Psoas muscle (tissue), 8 donors: ENCODE measurements at regions of chr16 and their contacts with region 1.

Region 1: GRCh38 chr16:12067714-12068401 is 91.3 kb downstream of the SNX29 start:
- DNase-seq: peak in 1 of 2 donors; percentile 23
- ATAC-seq: peak; percentile 78 to 90 (median 80)
- H3K4me3 ChIP-seq: no peak overlapping the region
- H3K27ac ChIP-seq: no peak overlapping the region
- H3K4me1 ChIP-seq: peaks cover 6% of the 10 kb centered on the region
- H3K27me3 ChIP-seq: no peaks in the 10 kb centered on the region
- CTCF ChIP-seq: peak; percentile 93

Region 2: DNA sequence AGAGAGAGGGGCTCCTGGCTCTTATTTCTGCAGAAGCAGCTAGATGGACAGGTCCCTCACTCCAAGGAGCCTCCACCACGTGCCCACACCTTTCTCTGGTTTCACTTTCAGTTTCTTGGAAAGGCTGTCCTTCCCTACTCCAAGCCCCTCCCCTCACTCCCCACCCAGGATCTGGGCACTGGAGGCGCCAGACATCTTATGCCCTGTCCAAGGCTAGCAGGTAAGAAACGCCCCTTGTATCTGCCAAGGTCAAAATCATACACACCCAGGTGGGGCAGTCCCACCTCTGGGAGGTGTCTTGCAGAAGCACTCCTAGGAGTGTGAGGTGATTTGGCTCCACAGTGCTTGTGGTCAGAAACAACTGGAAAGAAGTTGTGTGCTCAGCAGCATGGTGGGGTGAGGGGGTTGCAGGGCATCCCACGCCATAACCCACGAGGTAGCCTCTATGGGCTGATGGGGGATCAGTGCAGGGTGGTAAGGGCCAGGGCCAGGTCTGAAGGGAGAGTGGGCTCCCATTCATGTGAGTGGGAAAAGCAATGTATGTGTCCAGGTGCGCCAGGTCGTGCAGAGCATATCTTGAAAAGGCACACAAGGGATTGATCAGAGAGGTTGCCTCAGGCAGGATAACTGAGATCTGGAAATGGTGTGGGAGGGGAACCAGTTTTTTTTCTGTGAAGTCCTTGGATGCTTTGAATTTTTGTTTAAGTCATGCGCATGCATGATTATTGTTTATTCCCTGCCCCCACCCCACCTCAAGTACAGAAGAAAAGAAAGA is 755.0 kb before region 1 on chr16:
- intact Hi-C with region 1: no loop called
- DNase-seq: no peak
- ATAC-seq: no peak
- H3K4me3 ChIP-seq: no peak overlapping the region
- H3K27ac ChIP-seq: no peak overlapping the region
- H3K4me1 ChIP-seq: no peaks in the 10 kb centered on the region
- H3K27me3 ChIP-seq: peaks cover 0 to 8% (median 0%) of the 10 kb centered on the region in 3 donors
- CTCF ChIP-seq: no peak

Region 3: GRCh38 chr16:11949527-11949926 is 118.3 kb before region 1 on chr16:
- intact Hi-C with region 1: loop called (anchors 1 to 5 kb)
- DNase-seq: no peak
- ATAC-seq: peak in 3 of 4 donors; percentile 58 to 76 (median 61)
- H3K4me3 ChIP-seq: no peak overlapping the region
- H3K27ac ChIP-seq: no peak overlapping the region
- H3K4me1 ChIP-seq: no peaks in the 10 kb centered on the region
- H3K27me3 ChIP-seq: no peaks in the 10 kb centered on the region
- CTCF ChIP-seq: peak; percentile 47

Region 4: GRCh38 chr16:12089492-12090150 is 21.8 kb after region 1 on chr16:
- intact Hi-C with region 1: no loop called
- DNase-seq: peak in 1 of 2 donors; percentile 34
- ATAC-seq: peak in 3 of 4 donors; percentile 42 to 56 (median 53)
- H3K4me3 ChIP-seq: peak overlapping the region; percentile 22
- H3K27ac ChIP-seq: no peak overlapping the region
- H3K4me1 ChIP-seq: peaks cover 5% of the 10 kb centered on the region
- H3K27me3 ChIP-seq: no peaks in the 10 kb centered on the region
- CTCF ChIP-seq: no peak

Region 5: GRCh38 chr16:12188061-12188934 is 120.4 kb after region 1 on chr16:
- intact Hi-C with region 1: no loop called
- DNase-seq: no peak
- ATAC-seq: peak in 1 of 4 donors; percentile 34
- H3K4me3 ChIP-seq: no peak overlapping the region
- H3K27ac ChIP-seq: no peak overlapping the region
- H3K4me1 ChIP-seq: peaks cover 15% of the 10 kb centered on the region
- H3K27me3 ChIP-seq: no peaks in the 10 kb centered on the region
- CTCF ChIP-seq: no peak